Activated naive CD4-positive, alpha-beta T cell treated with anti-CD3 and anti-CD28 coated beads for 36 hours (primary cell): ENCODE measurements at regions of chr19 and their contacts with region 1.

Region 1: GRCh38 chr19:35710784-35711723 is 6.7 kb downstream of the ZBTB32 start:
- DNase-seq: peak; percentile 87
- H3K4me3 Mint-ChIP-seq: peak overlapping the region; percentile 52
- H3K27ac Mint-ChIP-seq: peak overlapping the region; percentile 100
- H3K4me1 Mint-ChIP-seq: peaks cover 44% of the 10 kb centered on the region
- H3K27me3 Mint-ChIP-seq: no peaks in the 10 kb centered on the region

Region 2: GRCh38 chr19:35673121-35673804 is 37.8 kb before region 1 on chr19:
- CTCF ChIA-PET with region 1: no interaction called
- intact Hi-C with region 1: loop called (anchors 2 kb)
- DNase-seq: peak; percentile 80
- H3K4me3 Mint-ChIP-seq: peak overlapping the region; percentile 47
- H3K27ac Mint-ChIP-seq: no peak overlapping the region
- H3K4me1 Mint-ChIP-seq: peaks cover 5% of the 10 kb centered on the region
- H3K27me3 Mint-ChIP-seq: peaks cover 25% of the 10 kb centered on the region